ENCODE measurements at regions of chr2 and their contacts with region 1.

Region 1: GRCh38 chr2:64101141-64101591 is 43.1 kb downstream of the PELI1 start:
- DNase-seq: peak; percentile 52
- H3K4me3 ChIP-seq: peak overlapping the region; percentile 33
- H3K27ac ChIP-seq: peak overlapping the region; percentile 99
- H3K4me1 ChIP-seq: peaks cover 92% of the 10 kb centered on the region
- CTCF ChIP-seq: no peak

Region 2: GRCh38 chr2:63841254-63842022 is 259.7 kb before region 1 on chr2 and contains the start of gene UGP2:
- CTCF ChIA-PET with region 1: no interaction called
- POLR2A ChIA-PET with region 1: no interaction called
- intact Hi-C with region 1: no loop called
- DNase-seq: peak; percentile 92
- H3K4me3 ChIP-seq: peak within 1 kb of the TSS; percentile 79
- H3K27ac ChIP-seq: peak within 1 kb of the TSS; percentile 87
- H3K4me1 ChIP-seq: peaks cover 59% of the 10 kb centered on the region
- CTCF ChIP-seq: peak; percentile 55
- total RNA-seq, gene UGP2: 53.7 and 56.9 TPM in 2 replicates

Region 3: GRCh38 chr2:64062829-64063228 is 38.3 kb before region 1 on chr2:
- CTCF ChIA-PET with region 1: interaction called, 3 read pairs
- POLR2A ChIA-PET with region 1: interaction called, 25 read pairs
- intact Hi-C with region 1: no loop called
- DNase-seq: peak; percentile 78
- H3K4me3 ChIP-seq: peak overlapping the region; percentile 36
- H3K27ac ChIP-seq: peak overlapping the region; percentile 96
- H3K4me1 ChIP-seq: peaks cover 96% of the 10 kb centered on the region
- CTCF ChIP-seq: no peak

Region 4: GRCh38 chr2:64114063-64114911 is 13.1 kb after region 1 on chr2:
- CTCF ChIA-PET with region 1: no interaction called
- POLR2A ChIA-PET with region 1: interaction called, 17 read pairs
- intact Hi-C with region 1: no loop called
- DNase-seq: no peak
- H3K4me3 ChIP-seq: peak overlapping the region; percentile 15
- H3K27ac ChIP-seq: peak overlapping the region; percentile 63
- H3K4me1 ChIP-seq: peaks cover 98% of the 10 kb centered on the region
- CTCF ChIP-seq: no peak

Region 5: DNA sequence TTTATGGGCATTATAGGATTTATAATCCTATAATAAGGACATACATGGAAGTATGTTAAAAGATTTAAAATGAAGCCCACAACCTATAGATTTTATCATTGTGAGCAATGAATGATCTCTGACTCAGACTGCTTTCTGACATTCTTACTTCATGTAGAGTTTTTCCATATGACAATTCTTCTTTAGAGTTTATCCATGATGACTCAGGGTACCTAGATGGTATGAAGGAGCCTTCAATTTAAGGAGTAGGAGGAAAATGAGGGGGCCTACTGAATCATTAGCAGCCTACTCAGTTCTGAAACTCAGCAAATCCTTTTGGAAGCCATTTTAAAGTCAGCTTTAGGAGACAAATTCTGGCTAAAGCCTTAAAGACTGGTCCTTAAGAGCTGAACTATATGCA is 32.7 kb after region 1 on chr2:
- CTCF ChIA-PET with region 1: no interaction called
- POLR2A ChIA-PET with region 1: interaction called, 10 read pairs
- intact Hi-C with region 1: no loop called
- DNase-seq: no peak
- H3K4me3 ChIP-seq: no peak overlapping the region
- H3K27ac ChIP-seq: peak overlapping the region; percentile 21
- H3K4me1 ChIP-seq: peaks cover 93% of the 10 kb centered on the region
- CTCF ChIP-seq: no peak

Region 6: DNA sequence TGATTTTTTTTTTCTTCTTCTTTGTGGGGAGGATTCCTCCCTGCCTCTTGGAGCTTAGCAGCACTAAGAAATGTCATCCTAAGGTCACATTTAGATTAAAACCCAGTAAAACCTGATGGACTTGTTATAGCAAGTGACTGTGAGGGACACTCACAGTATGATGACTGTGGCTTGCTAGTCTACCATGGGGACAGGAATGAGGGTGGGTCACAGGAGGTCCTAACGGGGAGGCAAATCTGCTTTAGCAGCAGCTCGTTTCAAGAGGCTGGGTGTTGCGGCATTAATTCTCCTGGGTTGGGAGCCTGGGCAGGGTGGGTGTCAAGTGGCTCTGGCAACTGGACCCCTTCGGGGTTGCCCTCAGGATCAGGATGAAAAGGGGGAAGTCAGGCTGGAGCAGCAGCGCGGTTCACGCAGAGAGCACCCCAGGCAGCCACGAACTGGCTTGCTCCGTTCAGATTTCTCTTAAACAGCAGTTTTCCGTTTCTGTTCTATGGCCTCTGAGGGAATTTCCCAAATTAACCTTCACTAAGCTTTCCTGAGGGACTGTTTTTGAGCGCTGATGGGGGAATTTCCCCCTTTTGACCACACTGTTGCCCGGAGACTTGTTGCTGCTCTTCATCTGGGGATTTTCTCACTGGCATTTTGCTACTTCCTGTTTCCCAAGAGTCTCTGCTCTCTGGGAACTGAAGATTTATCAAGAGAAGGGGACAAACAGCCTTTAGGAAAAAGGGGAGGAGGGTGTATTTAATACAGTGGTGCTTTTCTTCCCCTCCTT is 102.9 kb after region 1 on chr2:
- CTCF ChIA-PET with region 1: no interaction called
- POLR2A ChIA-PET with region 1: no interaction called
- intact Hi-C with region 1: no loop called
- DNase-seq: no peak
- H3K4me3 ChIP-seq: no peak overlapping the region
- H3K27ac ChIP-seq: no peak overlapping the region
- H3K4me1 ChIP-seq: peaks cover 44% of the 10 kb centered on the region
- CTCF ChIP-seq: no peak

Measured in OCI-LY7 (cell line).